ENCODE measurements at regions of chr4 and their contacts with region 1.

Region 1: GRCh38 chr4:119865389-119865788 is 201.3 kb downstream of the MAD2L1 start:
- DNase-seq: no peak
- H3K4me3 ChIP-seq: no peak overlapping the region
- H3K27ac ChIP-seq: peak overlapping the region; percentile 74 to 78
- H3K4me1 ChIP-seq: peaks cover 0 to 22% of the 10 kb centered on the region in 2 donors
- H3K27me3 ChIP-seq: no peaks in the 10 kb centered on the region
- CTCF ChIP-seq: no peak

Region 2: DNA sequence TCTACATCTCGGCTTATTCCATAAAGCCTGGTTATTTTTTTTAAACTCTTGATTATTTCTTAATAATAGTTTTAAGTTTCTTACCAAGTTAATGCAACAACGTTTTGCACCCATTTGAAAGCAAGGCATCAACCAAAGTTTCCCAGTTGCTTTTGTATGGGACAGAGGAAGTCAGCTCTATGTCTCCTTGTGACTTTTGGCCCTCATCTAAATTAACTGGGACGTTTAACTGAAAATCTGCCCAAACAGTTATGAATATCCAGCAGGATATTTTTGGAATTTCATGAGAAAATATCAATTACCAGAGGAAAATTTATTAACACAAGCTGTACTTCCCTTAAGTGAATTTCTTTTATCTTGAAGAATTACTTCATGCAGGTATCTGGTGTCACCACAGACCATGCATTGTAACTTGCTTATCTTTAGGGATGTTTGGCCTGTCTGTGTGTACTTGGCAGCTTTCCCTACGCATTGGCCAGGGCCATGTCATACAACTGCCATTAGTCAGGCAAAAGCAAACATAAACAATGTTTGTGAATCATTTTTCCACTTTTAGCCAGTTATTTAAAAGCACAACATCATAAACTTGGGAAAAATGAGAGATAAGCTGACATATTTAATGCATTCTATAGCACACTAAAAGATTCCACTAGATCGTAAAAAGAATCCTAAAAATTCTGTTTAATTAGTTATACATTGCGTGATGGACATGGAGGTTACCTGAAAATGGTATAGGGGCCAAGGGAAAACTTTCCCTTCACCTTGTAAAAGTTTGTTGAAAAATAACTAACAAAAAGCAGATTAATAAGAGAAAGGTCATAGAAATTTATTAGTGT is 135.3 kb before region 1 on chr4:
- intact Hi-C with region 1: loop called (anchors 5 kb)
- DNase-seq: peak; percentile 11 to 90
- H3K4me3 ChIP-seq: peak overlapping the region in 1 of 2 donors; percentile 6
- H3K27ac ChIP-seq: peak overlapping the region; percentile 89 to 90
- H3K4me1 ChIP-seq: peaks cover 12 to 74% of the 10 kb centered on the region in 2 donors
- H3K27me3 ChIP-seq: no peaks in the 10 kb centered on the region
- CTCF ChIP-seq: no peak

Region 3: DNA sequence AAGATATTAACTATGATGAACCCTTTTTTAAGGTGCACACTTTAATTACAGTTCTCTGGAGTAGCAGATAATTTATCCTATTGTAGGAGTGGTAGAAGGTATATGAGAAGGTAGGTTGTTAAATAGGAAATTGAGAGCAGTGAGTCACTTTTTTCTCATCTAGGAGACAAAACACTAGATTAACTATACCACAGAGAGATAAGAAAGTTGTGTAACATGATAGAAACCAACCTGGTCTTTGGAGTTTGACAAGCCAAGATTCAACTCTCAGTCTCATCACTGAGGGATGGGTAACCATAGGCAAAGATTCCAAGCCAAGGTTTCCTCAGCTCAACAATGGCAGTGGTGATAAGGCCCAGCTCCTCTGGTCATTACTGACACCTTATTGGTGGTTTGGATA is 97.2 kb after region 1 on chr4:
- intact Hi-C with region 1: no loop called
- DNase-seq: no peak
- H3K4me3 ChIP-seq: no peak overlapping the region
- H3K27ac ChIP-seq: no peak overlapping the region
- H3K4me1 ChIP-seq: no peaks in the 10 kb centered on the region
- H3K27me3 ChIP-seq: no peaks in the 10 kb centered on the region
- CTCF ChIP-seq: no peak

Measured in ascending aorta (tissue), 2 donors.